Mammary epithelial cell (primary cell): ENCODE measurements at regions of chrX and their contacts with region 1.

Region 1: DNA sequence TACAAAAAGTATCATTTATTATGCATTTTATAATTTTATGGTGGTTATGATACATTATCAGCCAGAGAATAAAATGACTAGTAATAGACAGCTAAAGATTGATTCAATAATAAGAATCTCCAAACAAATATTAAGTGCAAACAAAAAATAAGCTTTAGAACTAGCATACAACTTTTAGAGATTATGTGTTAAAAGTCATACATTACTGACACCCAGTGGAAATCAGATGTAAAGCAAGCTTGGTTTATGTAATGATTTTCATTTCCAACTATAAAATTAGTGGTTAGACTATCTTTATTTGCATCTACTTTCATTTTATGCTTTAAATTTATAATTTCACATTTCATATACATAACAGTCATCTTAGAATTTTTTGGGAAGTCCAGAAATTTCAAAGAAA is 57.7 kb downstream of the IL13RA2 start:
- DNase-seq: peak; percentile 5
- H3K4me3 ChIP-seq: no peak overlapping the region
- H3K27ac ChIP-seq: no peak overlapping the region
- H3K4me1 ChIP-seq: no peaks in the 10 kb centered on the region
- H3K27me3 ChIP-seq: no peaks in the 10 kb centered on the region
- CTCF ChIP-seq: peak; percentile 35 to 59

Region 2: GRCh38 chrX:113929004-113929403 is 1030.7 kb before region 1 on chrX:
- CTCF ChIA-PET with region 1: no interaction called
- dilution Hi-C with region 1: no loop called
- in situ Hi-C with region 1: no loop called
- intact Hi-C with region 1: loop called (anchors 10 kb)
- DNase-seq: peak; percentile 39
- H3K4me3 ChIP-seq: no peak overlapping the region
- H3K27ac ChIP-seq: no peak overlapping the region
- H3K4me1 ChIP-seq: no peaks in the 10 kb centered on the region
- H3K27me3 ChIP-seq: peaks cover 2% of the 10 kb centered on the region
- CTCF ChIP-seq: peak; percentile 57 to 80

Region 3: GRCh38 chrX:114611018-114611619 is 348.6 kb before region 1 on chrX:
- CTCF ChIA-PET with region 1: no interaction called
- dilution Hi-C with region 1: no loop called
- in situ Hi-C with region 1: no loop called
- intact Hi-C with region 1: loop called (anchors 5 kb)
- DNase-seq: peak; percentile 17
- H3K4me3 ChIP-seq: no peak overlapping the region
- H3K27ac ChIP-seq: no peak overlapping the region
- H3K4me1 ChIP-seq: no peaks in the 10 kb centered on the region
- H3K27me3 ChIP-seq: no peaks in the 10 kb centered on the region
- CTCF ChIP-seq: peak; percentile 82 to 87

Region 4: GRCh38 chrX:114619874-114620273 is 339.9 kb before region 1 on chrX:
- CTCF ChIA-PET with region 1: no interaction called
- dilution Hi-C with region 1: no loop called
- in situ Hi-C with region 1: loop called in 1 of 2 experiments (anchors 10 kb)
- intact Hi-C with region 1: no loop called
- DNase-seq: no peak
- H3K4me3 ChIP-seq: no peak overlapping the region
- H3K27ac ChIP-seq: no peak overlapping the region
- H3K4me1 ChIP-seq: no peaks in the 10 kb centered on the region
- H3K27me3 ChIP-seq: no peaks in the 10 kb centered on the region
- CTCF ChIP-seq: peak; percentile 51 to 58

Region 5: DNA sequence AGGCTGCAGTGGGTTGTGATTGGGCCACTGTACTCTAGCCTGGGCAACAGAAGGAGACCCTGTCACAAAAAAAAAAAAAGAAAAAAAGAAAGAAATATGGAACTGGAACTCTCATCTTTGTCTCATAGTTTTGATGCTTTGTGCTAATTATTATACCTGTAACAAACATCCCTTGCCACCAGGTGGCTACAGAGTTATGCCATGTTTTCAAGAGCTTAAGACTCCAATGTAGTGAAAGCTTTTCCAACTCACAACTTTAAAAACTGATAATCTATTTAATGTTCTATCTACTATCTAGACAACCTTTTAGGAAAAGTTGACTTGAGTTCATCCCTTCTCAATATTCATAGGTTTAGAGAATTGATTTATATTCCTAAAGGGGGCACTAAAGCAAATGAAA is 333.4 kb before region 1 on chrX:
- CTCF ChIA-PET with region 1: interaction called, 14 read pairs
- dilution Hi-C with region 1: no loop called
- in situ Hi-C with region 1: loop called (anchors 10 kb)
- intact Hi-C with region 1: loop called (anchors 1 kb)
- DNase-seq: peak; percentile 5
- H3K4me3 ChIP-seq: no peak overlapping the region
- H3K27ac ChIP-seq: no peak overlapping the region
- H3K4me1 ChIP-seq: no peaks in the 10 kb centered on the region
- H3K27me3 ChIP-seq: no peaks in the 10 kb centered on the region
- CTCF ChIP-seq: peak; percentile 51 to 65

Region 6: DNA sequence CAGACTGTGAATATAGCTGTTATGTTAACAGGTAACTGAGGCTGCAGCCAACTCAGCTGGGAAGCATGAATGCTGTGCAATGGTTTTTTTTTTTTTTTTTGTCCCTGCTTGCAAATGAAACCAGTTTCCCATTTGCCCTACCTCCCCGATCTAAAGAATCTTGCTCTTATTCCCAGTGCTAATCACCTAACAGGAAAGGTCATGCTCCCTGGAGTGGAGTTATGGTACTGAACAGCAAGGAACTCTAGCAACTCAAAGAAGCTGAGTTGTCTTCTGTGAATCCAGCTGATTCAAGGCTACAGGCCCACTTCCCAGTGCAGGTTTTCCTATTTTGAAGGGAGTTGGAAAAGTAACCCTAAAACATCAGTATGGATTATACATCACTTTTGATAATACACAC is 323.7 kb before region 1 on chrX:
- CTCF ChIA-PET with region 1: no interaction called
- dilution Hi-C with region 1: no loop called
- in situ Hi-C with region 1: loop called in 1 of 2 experiments (anchors 10 kb)
- intact Hi-C with region 1: no loop called
- DNase-seq: no peak
- H3K4me3 ChIP-seq: no peak overlapping the region
- H3K27ac ChIP-seq: no peak overlapping the region
- H3K4me1 ChIP-seq: no peaks in the 10 kb centered on the region
- H3K27me3 ChIP-seq: peaks cover 9% of the 10 kb centered on the region
- CTCF ChIP-seq: no peak

Region 7: DNA sequence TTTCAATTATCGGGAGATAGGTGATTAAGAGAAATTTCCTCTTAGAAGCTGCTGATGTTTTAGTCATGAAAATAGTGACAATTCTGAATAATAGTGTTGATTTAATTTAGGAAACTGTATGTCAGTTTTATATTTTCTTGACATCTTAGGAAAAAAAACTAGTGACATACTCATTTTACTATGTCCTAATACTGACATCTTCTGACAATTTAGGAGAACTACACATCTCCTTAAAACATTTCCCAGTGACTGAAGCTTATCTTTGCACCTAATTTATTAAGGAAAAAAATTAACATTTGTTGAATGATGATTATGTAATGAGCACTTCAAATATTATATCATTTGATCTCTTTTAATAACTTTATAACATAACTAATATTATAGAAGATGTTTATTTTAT is 187.5 kb after region 1 on chrX:
- CTCF ChIA-PET with region 1: no interaction called
- dilution Hi-C with region 1: no loop called
- in situ Hi-C with region 1: no loop called
- intact Hi-C with region 1: loop called (anchors 1 kb)
- DNase-seq: peak; percentile 4
- H3K4me3 ChIP-seq: no peak overlapping the region
- H3K27ac ChIP-seq: no peak overlapping the region
- H3K4me1 ChIP-seq: no peaks in the 10 kb centered on the region
- H3K27me3 ChIP-seq: peaks cover 3% of the 10 kb centered on the region
- CTCF ChIP-seq: peak; percentile 47 to 57

Region 8: GRCh38 chrX:115499112-115499805 is 539.5 kb after region 1 on chrX:
- CTCF ChIA-PET with region 1: no interaction called
- dilution Hi-C with region 1: no loop called
- in situ Hi-C with region 1: no loop called
- intact Hi-C with region 1: no loop called
- DNase-seq: no peak
- H3K4me3 ChIP-seq: no peak overlapping the region
- H3K27ac ChIP-seq: no peak overlapping the region
- H3K4me1 ChIP-seq: no peaks in the 10 kb centered on the region
- H3K27me3 ChIP-seq: peaks cover 6% of the 10 kb centered on the region
- CTCF ChIP-seq: no peak